Heart right ventricle (tissue), 16 donors: ENCODE measurements at regions of chr7 and their contacts with region 1.

Region 1: GRCh38 chr7:29237489-29237888 is 42.9 kb downstream of the CHN2 start:
- DNase-seq: no peak
- ATAC-seq: peak in 6 of 8 donors; percentile 44 to 73 (median 54)
- H3K4me3 ChIP-seq: no peak overlapping the region
- H3K27ac ChIP-seq: no peak overlapping the region
- H3K4me1 ChIP-seq: peaks cover 0 to 27% (median 0%) of the 10 kb centered on the region in 9 donors
- H3K27me3 ChIP-seq: no peaks in the 10 kb centered on the region
- CTCF ChIP-seq: no peak

Region 2: GRCh38 chr7:28990200-28990960 is 247.1 kb before region 1 on chr7:
- intact Hi-C with region 1: no loop called
- DNase-seq: peak; percentile 73 to 80
- ATAC-seq: peak; percentile 55 to 88 (median 81)
- H3K4me3 ChIP-seq: no peak overlapping the region
- H3K27ac ChIP-seq: peak overlapping the region in 5 of 10 donors; percentile 1 to 77 (median 29)
- H3K4me1 ChIP-seq: peaks cover 0 to 49% (median 42%) of the 10 kb centered on the region in 9 donors
- H3K27me3 ChIP-seq: no peaks in the 10 kb centered on the region
- CTCF ChIP-seq: no peak

Region 3: GRCh38 chr7:29196191-29196590 is 41.3 kb before region 1 on chr7:
- intact Hi-C with region 1: loop called in 1 of 10 experiments (anchors 2 kb)
- DNase-seq: no peak
- ATAC-seq: no peak
- H3K4me3 ChIP-seq: peak overlapping the region in 3 of 10 donors; percentile 73 to 82 (median 77)
- H3K27ac ChIP-seq: no peak overlapping the region
- H3K4me1 ChIP-seq: peaks cover 0 to 31% (median 16%) of the 10 kb centered on the region in 9 donors
- H3K27me3 ChIP-seq: peaks cover 0 to 42% (median 7%) of the 10 kb centered on the region in 7 donors
- CTCF ChIP-seq: no peak